Tibial artery (tissue), 4 donors: ENCODE measurements at regions of chr17 and their contacts with region 1.

Region 1: GRCh38 chr17:48878918-48879898 is 13.4 kb upstream of the ATP5MC1 start:
- DNase-seq: peak in 1 of 2 donors; percentile 39
- H3K4me3 ChIP-seq: no peak overlapping the region
- H3K27ac ChIP-seq: no peak overlapping the region
- H3K4me1 ChIP-seq: no peaks in the 10 kb centered on the region
- H3K27me3 ChIP-seq: peaks cover 0 to 6% of the 10 kb centered on the region in 2 donors
- CTCF ChIP-seq: peak; percentile 94 to 96

Region 2: DNA sequence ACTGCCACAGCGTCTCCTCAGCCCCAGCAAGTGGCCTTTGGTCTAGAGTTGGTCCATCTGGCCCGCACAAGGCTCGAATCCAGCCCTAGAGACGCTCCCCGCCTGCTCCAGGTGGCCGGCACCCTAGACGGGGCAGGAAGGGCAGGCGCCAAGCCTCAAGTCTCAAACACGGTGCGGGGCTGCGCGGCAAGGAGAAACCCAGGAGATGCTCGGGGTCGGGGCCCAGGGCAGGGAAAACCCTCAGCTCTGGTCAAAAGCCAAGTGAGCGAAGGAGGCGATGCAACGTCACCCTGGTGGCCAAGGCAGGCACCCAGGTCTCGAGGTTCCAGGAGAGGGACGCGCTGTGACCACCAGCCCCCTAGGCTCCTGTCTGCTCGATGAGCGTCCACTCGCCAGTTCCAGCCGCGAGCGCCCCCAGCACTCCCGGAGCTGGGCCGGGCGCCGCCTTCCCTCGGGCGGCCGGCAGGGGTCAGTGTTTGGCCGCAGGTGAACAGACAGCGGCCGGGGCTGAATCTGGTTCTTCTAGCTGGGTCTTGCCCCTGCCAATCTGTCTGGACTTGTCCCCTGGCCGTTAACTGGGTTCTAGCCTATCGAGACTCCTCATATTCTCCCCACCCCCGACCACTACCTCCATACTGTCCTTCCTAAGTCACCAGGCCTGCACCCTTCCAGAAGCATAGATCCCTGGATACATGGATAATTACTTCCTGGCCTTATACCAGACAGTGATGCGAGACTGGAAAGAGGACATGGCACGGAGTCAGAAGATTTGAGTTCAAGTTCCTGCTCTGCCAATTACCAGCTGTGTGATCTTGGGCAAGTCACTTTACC is 200.9 kb before region 1 on chr17:
- intact Hi-C with region 1: loop called (anchors 5 kb)
- DNase-seq: peak; percentile 29 to 66
- H3K4me3 ChIP-seq: no peak overlapping the region
- H3K27ac ChIP-seq: no peak overlapping the region
- H3K4me1 ChIP-seq: peaks cover 0 to 6% (median 2%) of the 10 kb centered on the region in 4 donors
- H3K27me3 ChIP-seq: peaks cover 0 to 78% of the 10 kb centered on the region in 2 donors
- CTCF ChIP-seq: peak; percentile 69 to 85

Region 3: DNA sequence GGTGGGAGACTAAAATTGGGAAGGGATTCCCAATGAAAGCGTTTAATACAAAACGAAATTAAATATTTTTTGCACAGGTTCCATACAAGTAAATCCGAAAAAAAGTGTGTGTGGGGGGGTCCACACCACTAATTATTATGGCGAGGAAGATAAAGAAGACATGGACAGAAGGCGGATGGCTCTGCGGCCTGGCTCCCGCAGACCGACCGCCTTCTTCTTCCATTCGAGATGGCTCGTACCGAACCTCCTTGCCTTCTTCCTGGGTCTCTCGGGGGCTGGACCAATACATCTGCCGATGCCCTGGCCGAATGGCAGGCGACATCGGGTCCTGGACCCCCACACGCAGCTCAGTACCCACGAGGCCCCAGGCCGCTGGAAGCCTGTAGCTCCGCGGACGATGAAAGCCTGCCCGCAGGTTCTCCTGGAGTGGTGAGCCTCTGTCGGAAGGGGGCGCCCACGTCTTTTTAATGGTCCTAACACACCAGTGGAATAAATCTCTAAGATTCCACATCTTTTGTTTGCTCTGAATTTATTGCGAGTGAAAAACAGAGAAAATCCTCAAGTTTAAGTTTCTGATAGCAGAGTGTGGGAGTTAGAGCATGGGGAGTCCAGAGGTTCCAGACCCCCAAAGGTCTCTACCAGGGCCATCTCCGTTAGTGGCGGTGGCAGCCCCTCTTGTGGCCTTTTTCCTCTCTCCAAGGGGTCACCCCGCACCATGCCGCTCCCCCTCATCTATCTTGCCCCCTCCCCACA is 154.8 kb before region 1 on chr17:
- intact Hi-C with region 1: loop called (anchors 10 kb)
- DNase-seq: peak; percentile 82 to 83
- H3K4me3 ChIP-seq: no peak overlapping the region
- H3K27ac ChIP-seq: no peak overlapping the region
- H3K4me1 ChIP-seq: peaks cover 0 to 40% (median 27%) of the 10 kb centered on the region in 4 donors
- H3K27me3 ChIP-seq: peaks cover 13 to 100% of the 10 kb centered on the region in 2 donors
- CTCF ChIP-seq: peak; percentile 53 to 56

Region 4: DNA sequence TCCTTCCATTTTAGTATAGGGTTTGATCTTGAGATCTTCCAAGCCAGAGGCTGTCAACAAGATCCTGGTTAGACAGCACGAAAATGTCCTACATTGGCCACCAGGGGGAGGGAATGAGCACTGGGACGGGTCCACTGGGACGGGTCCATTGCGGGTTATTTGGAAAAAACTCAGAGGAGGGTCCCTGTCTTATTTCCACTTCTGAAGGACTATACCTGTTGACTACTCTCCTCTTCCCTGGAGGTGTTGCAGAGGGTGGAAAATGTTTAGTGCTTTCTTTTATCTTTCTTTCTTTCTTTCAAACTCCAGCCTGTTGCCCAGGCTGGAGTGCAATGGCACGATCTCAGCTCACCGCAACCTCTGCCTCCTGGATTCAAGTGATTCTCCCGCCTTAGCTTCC is 64.7 kb before region 1 on chr17:
- intact Hi-C with region 1: loop called (anchors 2 kb)
- DNase-seq: peak in 1 of 2 donors; percentile 61
- H3K4me3 ChIP-seq: no peak overlapping the region
- H3K27ac ChIP-seq: no peak overlapping the region
- H3K4me1 ChIP-seq: peaks cover 0 to 20% (median 16%) of the 10 kb centered on the region in 4 donors
- H3K27me3 ChIP-seq: peaks cover 0 to 35% of the 10 kb centered on the region in 2 donors
- CTCF ChIP-seq: peak; percentile 73 to 74